PC-9 (cell line): ENCODE measurements at regions of chr12 and their contacts with region 1.

Region 1: DNA sequence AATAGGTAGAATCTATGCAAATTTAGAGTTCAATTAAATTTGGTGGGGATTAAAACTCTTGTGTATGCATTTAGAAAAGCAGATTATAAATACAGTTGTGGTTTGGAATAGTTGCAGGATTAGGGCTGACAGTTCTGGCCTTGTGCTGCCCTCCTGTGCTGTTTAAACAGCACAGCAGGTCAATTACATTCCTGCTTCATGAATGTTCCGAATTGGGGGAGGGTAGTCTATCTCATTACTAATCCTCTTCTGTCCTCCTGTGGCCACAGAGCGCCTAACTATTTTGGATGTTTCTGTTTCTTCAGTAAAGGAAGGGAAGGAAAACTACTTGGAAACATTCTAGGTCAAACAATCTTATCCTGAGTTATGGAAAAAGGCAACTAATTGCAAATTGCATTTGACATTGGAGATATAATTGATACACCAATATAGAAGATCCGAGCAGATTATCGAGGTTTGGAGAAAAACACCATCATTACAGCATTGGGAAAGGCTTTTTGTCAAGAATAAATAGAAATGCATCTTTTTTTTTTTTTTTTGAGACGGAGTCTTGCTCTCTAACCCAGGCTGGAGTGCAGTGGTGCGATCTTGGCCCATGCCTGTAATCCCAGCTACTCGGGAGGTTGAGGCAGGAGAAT is 8.7 kb upstream of the GPR19 start:
- DNase-seq: peak; percentile 65 to 83
- H3K4me3 ChIP-seq: no peak overlapping the region
- H3K27ac ChIP-seq: no peak overlapping the region
- H3K4me1 ChIP-seq: peaks cover 12% of the 10 kb centered on the region
- H3K27me3 ChIP-seq: no peaks in the 10 kb centered on the region
- CTCF ChIP-seq: peak; percentile 91

Region 2: DNA sequence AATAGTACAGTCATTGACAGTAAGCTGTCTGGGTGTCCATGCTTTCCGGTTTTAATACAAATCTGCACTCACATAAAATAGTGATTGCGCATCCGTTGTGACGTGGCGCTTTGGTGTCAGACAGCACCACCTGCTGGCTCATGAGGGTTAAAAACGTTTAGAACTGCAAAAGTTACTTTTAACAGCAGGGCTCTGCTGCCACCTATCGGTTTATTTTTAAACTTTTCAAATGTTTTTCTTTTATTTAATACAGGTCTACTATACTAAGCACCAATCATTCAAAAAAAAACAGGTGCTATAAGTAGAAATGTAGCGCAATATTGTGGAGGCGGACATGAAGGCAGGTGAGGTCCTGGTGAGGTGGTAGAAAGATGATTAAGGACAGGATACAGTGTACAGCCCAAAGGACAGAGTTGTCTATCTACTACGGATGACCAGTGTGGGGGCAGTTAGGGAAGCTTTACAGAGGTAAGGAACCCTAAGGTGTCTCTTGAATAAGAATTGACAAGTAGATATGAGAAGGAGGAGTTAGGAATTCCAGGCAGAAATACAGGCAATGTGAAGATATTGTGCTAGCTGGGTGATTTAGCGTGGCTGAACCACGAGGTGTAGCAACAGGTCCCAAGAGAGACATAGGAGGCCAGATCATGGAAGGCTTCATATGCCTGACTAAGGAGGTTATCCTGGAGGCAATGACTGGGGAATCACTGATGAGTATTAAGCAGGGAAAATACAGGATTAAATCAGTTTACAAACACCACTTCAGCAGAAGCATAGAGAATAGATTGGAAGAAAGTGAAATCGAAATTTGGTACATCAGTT is 1217.9 kb before region 1 on chr12:
- CTCF ChIA-PET with region 1: interaction called, 4 read pairs
- POLR2A ChIA-PET with region 1: no interaction called
- intact Hi-C with region 1: loop called (anchors 5 kb)
- DNase-seq: peak; percentile 66 to 71
- H3K4me3 ChIP-seq: no peak overlapping the region
- H3K27ac ChIP-seq: no peak overlapping the region
- H3K4me1 ChIP-seq: peaks cover 12% of the 10 kb centered on the region
- H3K27me3 ChIP-seq: no peaks in the 10 kb centered on the region
- CTCF ChIP-seq: peak; percentile 99

Region 3: GRCh38 chr12:11553871-11554533 is 1150.7 kb before region 1 on chr12:
- CTCF ChIA-PET with region 1: no interaction called
- POLR2A ChIA-PET with region 1: no interaction called
- intact Hi-C with region 1: loop called (anchors 1 kb)
- DNase-seq: peak; percentile 54 to 61
- H3K4me3 ChIP-seq: no peak overlapping the region
- H3K27ac ChIP-seq: no peak overlapping the region
- H3K4me1 ChIP-seq: peaks cover 21% of the 10 kb centered on the region; the same call in 1 of the 2 replicates
- H3K27me3 ChIP-seq: no peaks in the 10 kb centered on the region
- CTCF ChIP-seq: peak; percentile 79

Region 4: DNA sequence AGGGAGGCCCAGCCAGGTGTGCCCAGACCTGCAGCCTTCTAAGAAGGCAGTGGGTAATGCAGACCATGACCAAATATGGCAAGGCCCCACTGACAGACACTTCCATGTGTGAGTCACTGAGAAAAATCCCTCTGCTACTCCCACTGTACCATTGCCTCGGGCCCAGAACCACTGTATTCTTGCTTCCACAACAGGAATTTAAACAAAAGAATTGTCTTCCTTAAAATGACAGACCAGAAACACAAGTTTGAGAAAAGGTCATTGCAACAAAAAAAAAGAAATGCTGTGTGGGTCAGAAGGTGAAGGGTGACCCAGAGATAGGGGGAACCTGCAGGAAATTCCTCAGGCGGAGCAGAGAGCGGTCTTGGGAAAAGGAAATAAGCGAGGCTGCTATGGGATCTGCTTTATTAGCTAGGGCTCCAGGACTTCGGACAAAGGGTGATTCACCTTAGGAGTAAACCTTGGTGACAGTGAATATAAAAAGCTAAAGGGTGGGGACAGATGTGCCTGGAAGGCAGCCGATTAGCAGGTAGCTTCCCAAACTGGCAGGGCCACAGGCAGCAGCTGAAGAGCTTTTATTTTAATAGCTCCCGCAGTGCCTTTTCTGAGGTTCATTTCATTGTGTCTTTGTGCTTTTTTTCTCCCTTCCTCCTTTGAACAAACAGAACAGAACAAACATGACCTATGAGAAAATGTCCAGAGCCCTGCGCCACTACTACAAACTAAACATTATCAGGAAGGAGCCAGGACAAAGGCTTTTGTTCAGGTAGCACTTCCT is 819.3 kb before region 1 on chr12:
- CTCF ChIA-PET with region 1: interaction called, 11 read pairs
- POLR2A ChIA-PET with region 1: no interaction called
- intact Hi-C with region 1: no loop called
- DNase-seq: peak; percentile 89 to 99
- H3K4me3 ChIP-seq: peak overlapping the region; percentile 35; the same call in 1 of the 2 replicates
- H3K27ac ChIP-seq: peak overlapping the region; percentile 99
- H3K4me1 ChIP-seq: peaks cover 39% of the 10 kb centered on the region
- H3K27me3 ChIP-seq: no peaks in the 10 kb centered on the region
- CTCF ChIP-seq: no peak

Region 5: GRCh38 chr12:12376646-12377448 is 327.9 kb before region 1 on chr12:
- CTCF ChIA-PET with region 1: interaction called, 5 read pairs
- POLR2A ChIA-PET with region 1: no interaction called
- intact Hi-C with region 1: loop called (anchors 1 kb)
- DNase-seq: peak in 1 of 2 experiments; percentile 80
- H3K4me3 ChIP-seq: no peak overlapping the region
- H3K27ac ChIP-seq: no peak overlapping the region
- H3K4me1 ChIP-seq: no peaks in the 10 kb centered on the region
- H3K27me3 ChIP-seq: no peaks in the 10 kb centered on the region
- CTCF ChIP-seq: peak; percentile 87

Region 6: GRCh38 chr12:12611512-12612306 is 93.0 kb before region 1 on chr12 and contains the start of gene CREBL2:
- CTCF ChIA-PET with region 1: no interaction called
- POLR2A ChIA-PET with region 1: no interaction called
- intact Hi-C with region 1: loop called (anchors 5 kb)
- DNase-seq: peak; percentile 91 to 93
- H3K4me3 ChIP-seq: peak within 1 kb of the TSS; percentile 89
- H3K27ac ChIP-seq: peak within 1 kb of the TSS; percentile 83
- H3K4me1 ChIP-seq: peaks cover 30% of the 10 kb centered on the region
- H3K27me3 ChIP-seq: no peaks in the 10 kb centered on the region
- CTCF ChIP-seq: no peak
- total RNA-seq, gene CREBL2: 26.6 and 30.3 TPM in 2 replicates

Region 7: GRCh38 chr12:13383379-13383778 is 678.7 kb after region 1 on chr12:
- CTCF ChIA-PET with region 1: no interaction called
- POLR2A ChIA-PET with region 1: no interaction called
- intact Hi-C with region 1: no loop called
- DNase-seq: peak; percentile 61 to 82
- H3K4me3 ChIP-seq: no peak overlapping the region
- H3K27ac ChIP-seq: peak overlapping the region; percentile 93
- H3K4me1 ChIP-seq: peaks cover 56% of the 10 kb centered on the region
- H3K27me3 ChIP-seq: no peaks in the 10 kb centered on the region
- CTCF ChIP-seq: no peak

Region 8: DNA sequence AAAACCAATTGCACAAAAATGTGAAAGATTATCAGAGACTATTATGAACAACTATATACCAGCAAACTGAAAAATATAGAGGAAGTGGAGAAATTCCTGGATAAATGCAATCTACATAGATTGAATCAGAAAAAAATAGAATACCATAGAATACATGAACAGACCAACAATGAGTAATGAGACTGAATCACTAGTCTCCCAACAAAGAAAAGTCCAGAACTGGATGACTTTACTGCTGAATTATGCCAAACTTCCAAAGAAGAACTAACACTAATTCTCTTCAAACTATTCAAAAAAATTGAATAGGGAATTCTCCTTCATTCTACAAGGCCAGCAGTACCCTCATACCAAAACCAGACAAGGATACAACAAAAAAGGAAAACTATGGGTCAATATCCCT is 1931.1 kb after region 1 on chr12:
- CTCF ChIA-PET with region 1: no interaction called
- POLR2A ChIA-PET with region 1: no interaction called
- intact Hi-C with region 1: no loop called
- DNase-seq: no peak
- H3K4me3 ChIP-seq: no peak overlapping the region
- H3K27ac ChIP-seq: no peak overlapping the region
- H3K4me1 ChIP-seq: no peaks in the 10 kb centered on the region
- H3K27me3 ChIP-seq: no peaks in the 10 kb centered on the region
- CTCF ChIP-seq: no peak